ENCODE measurements at regions of chr2 and their contacts with region 1.

Region 1: GRCh38 chr2:197915548-197916265 is 111.3 kb downstream of the PLCL1 start:
- DNase-seq: no peak
- ATAC-seq: no peak
- H3K4me3 ChIP-seq: no peak overlapping the region
- H3K4me3 Mint-ChIP-seq: no peak overlapping the region
- H3K27ac ChIP-seq: no peak overlapping the region
- H3K27ac Mint-ChIP-seq: no peak overlapping the region
- H3K4me1 ChIP-seq: peaks cover 0 to 2% of the 10 kb centered on the region in 2 experiments
- H3K4me1 Mint-ChIP-seq: peaks cover 29 to 47% (median 29%) of the 10 kb centered on the region in 3 donors
- H3K27me3 ChIP-seq: no peaks in the 10 kb centered on the region
- H3K27me3 Mint-ChIP-seq: no peaks in the 10 kb centered on the region

Region 2: GRCh38 chr2:196836440-196836839 is 1079.3 kb before region 1 on chr2:
- CTCF ChIA-PET with region 1: no interaction called
- POLR2A ChIA-PET with region 1: no interaction called
- DNase-seq: no peak
- ATAC-seq: no peak
- H3K4me3 ChIP-seq: no peak overlapping the region
- H3K4me3 Mint-ChIP-seq: no peak overlapping the region
- H3K27ac ChIP-seq: no peak overlapping the region
- H3K27ac Mint-ChIP-seq: no peak overlapping the region
- H3K4me1 ChIP-seq: no peaks in the 10 kb centered on the region
- H3K4me1 Mint-ChIP-seq: no peaks in the 10 kb centered on the region
- H3K27me3 ChIP-seq: no peaks in the 10 kb centered on the region
- H3K27me3 Mint-ChIP-seq: no peaks in the 10 kb centered on the region

Region 3: DNA sequence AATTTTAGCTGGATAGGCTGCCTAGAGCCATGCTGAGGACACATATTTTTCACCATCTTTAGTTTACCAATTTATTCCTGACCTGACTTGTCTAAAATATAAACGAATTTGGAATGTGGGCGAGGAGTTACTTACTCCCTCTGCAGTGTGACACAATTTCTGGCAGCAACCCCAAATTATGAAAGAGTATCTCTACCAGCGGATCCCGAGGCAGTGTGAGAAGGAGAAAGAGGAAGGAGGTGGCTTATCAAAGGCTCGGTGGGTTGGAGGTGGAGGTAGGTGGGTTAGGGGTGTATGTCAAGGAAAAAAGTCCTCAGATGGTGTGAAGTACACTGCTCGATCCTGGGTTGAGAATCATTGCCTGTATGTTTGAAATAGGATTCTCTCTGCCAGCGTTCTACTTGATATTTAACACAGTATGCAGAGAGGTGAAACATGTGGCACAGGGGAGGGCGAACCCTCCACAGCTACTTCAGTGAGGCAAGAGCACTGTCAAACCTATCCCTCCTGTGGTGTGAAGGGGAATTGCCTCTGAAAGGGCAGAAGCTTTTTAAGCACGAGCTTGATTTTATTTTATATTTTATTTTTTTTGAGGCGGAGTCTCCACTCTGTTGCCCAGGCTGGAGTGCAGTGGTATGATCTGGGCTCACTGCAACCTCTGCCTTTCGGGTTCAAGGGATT is 316.3 kb before region 1 on chr2:
- CTCF ChIA-PET with region 1: no interaction called
- POLR2A ChIA-PET with region 1: no interaction called
- DNase-seq: peak in 31 of 35 experiments; percentile 8 to 61 (median 28)
- ATAC-seq: peak; percentile 79 to 97 (median 86)
- H3K4me3 ChIP-seq: no peak overlapping the region
- H3K4me3 Mint-ChIP-seq: peak overlapping the region in 1 of 3 donors; percentile 50
- H3K27ac ChIP-seq: no peak overlapping the region
- H3K27ac Mint-ChIP-seq: no peak overlapping the region
- H3K4me1 ChIP-seq: peaks cover 0 to 8% of the 10 kb centered on the region in 2 experiments
- H3K4me1 Mint-ChIP-seq: peaks cover 5 to 9% (median 5%) of the 10 kb centered on the region in 3 donors
- H3K27me3 ChIP-seq: peaks cover 0 to 7% of the 10 kb centered on the region in 2 experiments
- H3K27me3 Mint-ChIP-seq: peaks cover 5 to 14% of the 10 kb centered on the region in 2 donors

Region 4: GRCh38 chr2:198042189-198042588 is 126.5 kb after region 1 on chr2:
- CTCF ChIA-PET with region 1: interaction called in 1 of 2 experiments, 11 read pairs
- POLR2A ChIA-PET with region 1: no interaction called
- DNase-seq: peak in 6 of 35 experiments; percentile 1 to 34 (median 6)
- ATAC-seq: peak; percentile 74 to 82 (median 78)
- H3K4me3 ChIP-seq: peak overlapping the region in 1 of 2 donors; percentile 10
- H3K4me3 Mint-ChIP-seq: no peak overlapping the region
- H3K27ac ChIP-seq: peak overlapping the region; percentile 19
- H3K27ac Mint-ChIP-seq: no peak overlapping the region
- H3K4me1 ChIP-seq: peaks cover 18 to 24% of the 10 kb centered on the region in 2 experiments
- H3K4me1 Mint-ChIP-seq: peaks cover 4 to 24% (median 24%) of the 10 kb centered on the region in 3 donors
- H3K27me3 ChIP-seq: no peaks in the 10 kb centered on the region
- H3K27me3 Mint-ChIP-seq: no peaks in the 10 kb centered on the region

Region 5: GRCh38 chr2:198096002-198096401 is 180.3 kb after region 1 on chr2:
- CTCF ChIA-PET with region 1: no interaction called
- POLR2A ChIA-PET with region 1: no interaction called
- DNase-seq: no peak
- ATAC-seq: no peak
- H3K4me3 ChIP-seq: no peak overlapping the region
- H3K4me3 Mint-ChIP-seq: no peak overlapping the region
- H3K27ac ChIP-seq: no peak overlapping the region
- H3K27ac Mint-ChIP-seq: no peak overlapping the region
- H3K4me1 ChIP-seq: no peaks in the 10 kb centered on the region
- H3K4me1 Mint-ChIP-seq: peaks cover 0 to 9% (median 2%) of the 10 kb centered on the region in 3 donors
- H3K27me3 ChIP-seq: no peaks in the 10 kb centered on the region
- H3K27me3 Mint-ChIP-seq: no peaks in the 10 kb centered on the region